ENCODE measurements at regions of chrX and their contacts with region 1.

Region 1: GRCh38 chrX:78517124-78517523 is 142.0 kb downstream of the RTL3 start:
- DNase-seq: peak in 8 of 9 donors; percentile 37 to 92 (median 84)
- ATAC-seq: peak; percentile 95
- H3K4me3 ChIP-seq: no peak overlapping the region
- H3K4me3 Mint-ChIP-seq: peak overlapping the region in 9 of 10 donors; percentile 16 to 73 (median 67)
- H3K27ac ChIP-seq: peak overlapping the region; percentile 72
- H3K27ac Mint-ChIP-seq: peak overlapping the region; percentile 90 to 97 (median 92)
- H3K4me1 ChIP-seq: peaks cover 16 to 25% of the 10 kb centered on the region in 2 donors
- H3K4me1 Mint-ChIP-seq: peaks cover 2 to 58% (median 39%) of the 10 kb centered on the region in 7 donors
- H3K27me3 ChIP-seq: no peaks in the 10 kb centered on the region
- H3K27me3 Mint-ChIP-seq: no peaks in the 10 kb centered on the region

Region 2: DNA sequence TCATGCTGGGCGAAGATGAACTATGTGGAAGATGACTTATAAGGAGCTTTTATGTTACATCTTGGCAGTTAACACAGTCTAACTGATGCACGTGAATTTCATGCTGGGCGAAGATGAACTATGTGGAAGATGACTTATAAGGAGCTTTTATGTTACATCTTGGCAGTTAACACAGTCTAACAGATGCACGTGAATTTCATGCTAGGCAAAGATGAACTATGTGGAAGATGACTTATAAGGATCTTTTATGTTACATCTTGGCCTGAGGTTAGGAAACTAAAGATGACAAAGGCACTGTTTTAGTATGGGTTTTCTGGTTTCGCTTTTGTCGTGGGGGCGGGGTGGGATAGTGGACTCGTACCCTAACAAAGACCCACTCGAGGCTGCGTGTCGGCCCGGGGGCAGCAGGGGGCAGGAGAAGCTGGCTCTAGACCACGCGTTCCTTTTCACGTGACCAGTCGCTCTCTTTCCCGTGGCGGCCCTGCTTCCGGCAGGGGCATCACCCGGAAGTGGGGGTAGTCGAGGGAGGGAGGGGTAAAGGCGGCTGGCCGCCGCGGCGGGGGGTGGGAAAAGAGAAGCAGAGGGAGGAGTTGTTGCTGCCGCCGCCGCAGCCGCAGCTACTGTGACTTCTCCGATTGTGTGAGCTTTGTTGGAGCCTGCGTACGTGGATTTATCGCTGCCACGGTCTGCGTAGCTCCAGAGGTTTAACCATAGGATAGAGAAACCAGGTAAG is 606.9 kb before region 1 on chrX and contains the start of gene ATP7A:
- CTCF ChIA-PET with region 1: interaction called, 3 read pairs
- POLR2A ChIA-PET with region 1: no interaction called
- intact Hi-C with region 1: loop called (anchors 1 to 10 kb)
- DNase-seq: peak; percentile 62 to 94 (median 88)
- ATAC-seq: peak; percentile 97
- H3K4me3 ChIP-seq: peak within 1 kb of the TSS; percentile 98
- H3K4me3 Mint-ChIP-seq: peak within 1 kb of the TSS; percentile 91 to 100 (median 96)
- H3K27ac ChIP-seq: peak within 1 kb of the TSS; percentile 93
- H3K27ac Mint-ChIP-seq: peak within 1 kb of the TSS; percentile 94 to 99 (median 98)
- H3K4me1 ChIP-seq: peaks cover 3 to 10% of the 10 kb centered on the region in 2 donors
- H3K4me1 Mint-ChIP-seq: peaks cover 6 to 28% (median 16%) of the 10 kb centered on the region in 7 donors
- H3K27me3 ChIP-seq: no peaks in the 10 kb centered on the region
- H3K27me3 Mint-ChIP-seq: no peaks in the 10 kb centered on the region
- total RNA-seq, gene ATP7A: 10.9 to 17.4 (median 17.0) TPM

Region 3: GRCh38 chrX:78199851-78200250 is 317.3 kb before region 1 on chrX:
- CTCF ChIA-PET with region 1: no interaction called
- POLR2A ChIA-PET with region 1: no interaction called
- intact Hi-C with region 1: loop called in 1 of 2 experiments (anchors 5 kb)
- DNase-seq: peak in 6 of 9 donors; percentile 7 to 29 (median 9)
- ATAC-seq: peak; percentile 63
- H3K4me3 ChIP-seq: no peak overlapping the region
- H3K4me3 Mint-ChIP-seq: no peak overlapping the region
- H3K27ac ChIP-seq: no peak overlapping the region
- H3K27ac Mint-ChIP-seq: no peak overlapping the region
- H3K4me1 ChIP-seq: no peaks in the 10 kb centered on the region
- H3K4me1 Mint-ChIP-seq: no peaks in the 10 kb centered on the region
- H3K27me3 ChIP-seq: no peaks in the 10 kb centered on the region
- H3K27me3 Mint-ChIP-seq: no peaks in the 10 kb centered on the region

Region 4: GRCh38 chrX:78375894-78376293 is 141.2 kb before region 1 on chrX:
- CTCF ChIA-PET with region 1: no interaction called
- POLR2A ChIA-PET with region 1: no interaction called
- intact Hi-C with region 1: loop called in 1 of 2 experiments (anchors 2 kb)
- DNase-seq: peak in 3 of 9 donors; percentile 1 to 12 (median 2)
- ATAC-seq: peak; percentile 14
- H3K4me3 ChIP-seq: no peak overlapping the region
- H3K4me3 Mint-ChIP-seq: no peak overlapping the region
- H3K27ac ChIP-seq: no peak overlapping the region
- H3K27ac Mint-ChIP-seq: peak overlapping the region in 4 of 9 donors; percentile 2 to 66 (median 42)
- H3K4me1 ChIP-seq: no peaks in the 10 kb centered on the region
- H3K4me1 Mint-ChIP-seq: peaks cover 7 to 29% (median 14%) of the 10 kb centered on the region in 7 donors
- H3K27me3 ChIP-seq: no peaks in the 10 kb centered on the region
- H3K27me3 Mint-ChIP-seq: no peaks in the 10 kb centered on the region

Region 5: DNA sequence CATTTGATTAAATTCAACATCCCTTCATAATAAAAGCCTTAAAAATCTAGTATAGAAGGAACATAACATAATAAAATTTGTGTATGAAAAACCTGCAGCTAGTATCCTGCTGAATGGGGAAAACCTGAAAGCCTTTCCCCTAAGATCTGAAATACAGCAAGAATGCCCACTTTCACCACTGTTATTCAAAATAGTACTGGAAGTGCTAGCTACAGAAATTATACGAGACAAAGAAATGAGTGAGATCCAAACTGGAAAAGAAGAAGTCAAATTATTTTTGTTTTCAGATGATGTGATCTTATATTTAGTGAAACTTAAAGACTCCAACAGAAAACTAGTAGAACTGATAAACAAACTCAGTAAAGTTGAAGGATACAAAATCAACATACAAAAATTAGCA is 10.9 kb before region 1 on chrX:
- CTCF ChIA-PET with region 1: no interaction called
- POLR2A ChIA-PET with region 1: no interaction called
- intact Hi-C with region 1: no loop called
- DNase-seq: no peak
- ATAC-seq: no peak
- H3K4me3 ChIP-seq: no peak overlapping the region
- H3K4me3 Mint-ChIP-seq: no peak overlapping the region
- H3K27ac ChIP-seq: no peak overlapping the region
- H3K27ac Mint-ChIP-seq: no peak overlapping the region
- H3K4me1 ChIP-seq: no peaks in the 10 kb centered on the region
- H3K4me1 Mint-ChIP-seq: peaks cover 0 to 10% (median 0%) of the 10 kb centered on the region in 7 donors
- H3K27me3 ChIP-seq: no peaks in the 10 kb centered on the region
- H3K27me3 Mint-ChIP-seq: no peaks in the 10 kb centered on the region

Region 6: GRCh38 chrX:78653118-78653822 is 136.1 kb after region 1 on chrX:
- CTCF ChIA-PET with region 1: no interaction called
- POLR2A ChIA-PET with region 1: no interaction called
- intact Hi-C with region 1: loop called in 1 of 2 experiments (anchors 5 kb)
- DNase-seq: no peak
- ATAC-seq: peak; percentile 57
- H3K4me3 ChIP-seq: no peak overlapping the region
- H3K4me3 Mint-ChIP-seq: peak overlapping the region in 1 of 10 donors; percentile 74
- H3K27ac ChIP-seq: no peak overlapping the region
- H3K27ac Mint-ChIP-seq: peak overlapping the region in 1 of 9 donors; percentile 53
- H3K4me1 ChIP-seq: peaks cover 12 to 13% of the 10 kb centered on the region in 2 donors
- H3K4me1 Mint-ChIP-seq: peaks cover 11 to 35% (median 23%) of the 10 kb centered on the region in 7 donors
- H3K27me3 ChIP-seq: no peaks in the 10 kb centered on the region
- H3K27me3 Mint-ChIP-seq: no peaks in the 10 kb centered on the region

Region 7: GRCh38 chrX:79161655-79162054 is 644.5 kb after region 1 on chrX:
- CTCF ChIA-PET with region 1: no interaction called
- POLR2A ChIA-PET with region 1: no interaction called
- intact Hi-C with region 1: loop called (anchors 1 to 10 kb)
- DNase-seq: peak in 8 of 9 donors; percentile 22 to 85 (median 77)
- ATAC-seq: peak; percentile 95
- H3K4me3 ChIP-seq: peak overlapping the region; percentile 52
- H3K4me3 Mint-ChIP-seq: peak overlapping the region; percentile 80 to 96 (median 90)
- H3K27ac ChIP-seq: peak overlapping the region; percentile 76
- H3K27ac Mint-ChIP-seq: peak overlapping the region; percentile 95 to 99 (median 97)
- H3K4me1 ChIP-seq: peaks cover 48 to 50% of the 10 kb centered on the region in 2 donors
- H3K4me1 Mint-ChIP-seq: peaks cover 16 to 79% (median 68%) of the 10 kb centered on the region in 7 donors
- H3K27me3 ChIP-seq: no peaks in the 10 kb centered on the region
- H3K27me3 Mint-ChIP-seq: no peaks in the 10 kb centered on the region